Activated CD8-positive, alpha-beta T cell treated with anti-CD3 and anti-CD28 coated beads for 36 hours (primary cell): ENCODE measurements at regions of chr11 and their contacts with region 1.

Region 1: DNA sequence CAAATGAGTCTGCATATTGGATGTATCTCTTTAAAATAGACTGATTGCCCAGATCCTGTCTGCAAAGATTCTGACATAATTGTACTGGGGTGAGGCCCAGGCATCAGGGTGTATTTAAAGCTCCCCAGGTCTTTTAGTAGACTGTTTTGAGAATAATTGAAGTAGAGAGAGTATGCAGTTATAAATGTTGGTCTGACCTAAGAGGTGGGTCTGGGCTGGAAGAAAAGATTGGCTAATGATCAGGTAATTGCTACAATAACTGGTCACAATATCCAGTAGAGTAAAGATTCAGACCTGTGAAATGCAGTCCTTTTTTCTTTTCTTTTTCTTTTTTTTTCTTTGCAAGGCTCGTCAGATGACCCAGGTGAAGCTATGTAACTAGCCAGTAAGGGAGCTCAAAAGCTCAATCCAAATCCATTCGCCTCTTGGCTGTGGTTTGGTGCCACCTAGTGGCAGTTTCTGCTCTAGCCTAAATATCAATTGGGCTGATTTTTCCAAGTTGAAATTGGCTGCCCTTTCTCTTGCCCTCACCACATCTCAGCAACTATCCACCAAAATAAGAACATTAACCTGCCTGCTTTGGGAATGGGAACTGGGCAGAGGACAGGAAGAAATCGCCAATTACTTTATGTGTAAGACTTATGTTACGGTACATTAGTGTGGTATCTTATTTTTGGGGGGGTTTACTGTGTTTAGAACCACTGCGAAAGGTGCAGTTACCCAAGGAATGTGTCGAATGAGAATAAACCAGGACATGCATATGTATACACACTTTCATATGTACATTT is 45.9 kb downstream of the ZNF143 start:
- DNase-seq: peak; percentile 89
- ATAC-seq: peak; percentile 83
- H3K4me3 Mint-ChIP-seq: no peak overlapping the region
- H3K27ac Mint-ChIP-seq: no peak overlapping the region
- H3K4me1 Mint-ChIP-seq: peaks cover 8% of the 10 kb centered on the region
- H3K27me3 Mint-ChIP-seq: no peaks in the 10 kb centered on the region
- CTCF ChIP-seq: peak; percentile 82

Region 2: DNA sequence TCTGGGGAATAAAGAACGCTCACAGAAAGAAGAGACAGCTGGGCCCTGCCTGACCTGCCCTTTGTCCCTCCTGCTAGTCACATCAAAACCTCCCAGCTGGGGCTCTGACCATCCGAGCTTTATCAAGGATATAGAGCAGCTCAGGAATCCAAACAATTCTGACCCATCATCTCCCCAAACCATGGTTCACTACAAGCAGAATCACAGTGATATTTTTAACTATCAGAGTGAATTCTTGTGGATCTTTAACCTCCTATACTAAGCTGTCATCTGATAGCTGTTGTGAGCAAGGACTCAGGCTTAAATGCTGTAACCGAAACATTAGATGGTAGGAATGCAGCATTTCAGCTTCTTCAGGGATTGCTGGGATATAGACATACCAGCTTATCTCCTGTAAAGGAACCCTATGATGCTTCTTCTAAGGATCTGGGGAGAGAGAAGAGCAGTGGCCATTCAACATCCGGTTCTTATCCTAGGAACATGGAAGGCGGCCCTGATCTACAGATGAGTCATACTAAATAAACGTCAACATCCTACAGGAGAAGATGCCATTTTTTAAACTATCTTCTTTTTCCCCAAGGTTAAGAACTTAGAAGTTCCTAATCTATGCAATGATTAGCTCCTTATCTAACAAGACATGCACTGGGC is 680.4 kb before region 1 on chr11:
- CTCF ChIA-PET with region 1: no interaction called
- POLR2A ChIA-PET with region 1: no interaction called
- intact Hi-C with region 1: no loop called
- DNase-seq: no peak
- ATAC-seq: no peak
- H3K4me3 Mint-ChIP-seq: no peak overlapping the region
- H3K27ac Mint-ChIP-seq: no peak overlapping the region
- H3K4me1 Mint-ChIP-seq: no peaks in the 10 kb centered on the region
- H3K27me3 Mint-ChIP-seq: peaks cover 3% of the 10 kb centered on the region
- CTCF ChIP-seq: no peak

Region 3: DNA sequence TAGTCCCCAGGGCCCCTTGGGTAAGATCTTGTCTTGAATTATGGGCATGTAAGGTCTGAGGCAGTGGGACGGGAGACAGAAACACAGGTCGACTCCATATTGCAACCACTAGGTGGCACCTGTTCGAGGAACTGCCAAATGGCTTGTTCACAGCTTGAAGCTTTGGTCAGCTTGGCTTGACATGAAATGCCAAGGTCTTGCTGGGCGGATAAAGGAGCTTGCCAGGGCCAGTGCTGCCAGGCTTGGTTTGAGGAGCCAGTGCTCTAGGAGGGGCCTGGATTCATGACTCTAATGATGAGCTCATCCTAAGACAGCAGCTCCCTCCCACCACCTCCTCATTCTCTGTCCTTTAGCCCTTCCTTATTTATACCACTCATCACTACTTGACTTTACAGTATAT is 491.0 kb before region 1 on chr11:
- CTCF ChIA-PET with region 1: interaction called, 36 read pairs
- POLR2A ChIA-PET with region 1: no interaction called
- intact Hi-C with region 1: loop called (anchors 10 kb)
- DNase-seq: peak; percentile 72
- ATAC-seq: peak; percentile 97
- H3K4me3 Mint-ChIP-seq: no peak overlapping the region
- H3K27ac Mint-ChIP-seq: no peak overlapping the region
- H3K4me1 Mint-ChIP-seq: peaks cover 11% of the 10 kb centered on the region
- H3K27me3 Mint-ChIP-seq: no peaks in the 10 kb centered on the region
- CTCF ChIP-seq: peak; percentile 67

Region 4: GRCh38 chr11:9158898-9159391 is 347.7 kb before region 1 on chr11:
- CTCF ChIA-PET with region 1: interaction called, 5 read pairs
- POLR2A ChIA-PET with region 1: no interaction called
- intact Hi-C with region 1: loop called (anchors 10 kb)
- DNase-seq: no peak
- ATAC-seq: peak; percentile 54
- H3K4me3 Mint-ChIP-seq: no peak overlapping the region
- H3K27ac Mint-ChIP-seq: peak overlapping the region; percentile 83
- H3K4me1 Mint-ChIP-seq: peaks cover 25% of the 10 kb centered on the region
- H3K27me3 Mint-ChIP-seq: no peaks in the 10 kb centered on the region
- CTCF ChIP-seq: no peak

Region 5: DNA sequence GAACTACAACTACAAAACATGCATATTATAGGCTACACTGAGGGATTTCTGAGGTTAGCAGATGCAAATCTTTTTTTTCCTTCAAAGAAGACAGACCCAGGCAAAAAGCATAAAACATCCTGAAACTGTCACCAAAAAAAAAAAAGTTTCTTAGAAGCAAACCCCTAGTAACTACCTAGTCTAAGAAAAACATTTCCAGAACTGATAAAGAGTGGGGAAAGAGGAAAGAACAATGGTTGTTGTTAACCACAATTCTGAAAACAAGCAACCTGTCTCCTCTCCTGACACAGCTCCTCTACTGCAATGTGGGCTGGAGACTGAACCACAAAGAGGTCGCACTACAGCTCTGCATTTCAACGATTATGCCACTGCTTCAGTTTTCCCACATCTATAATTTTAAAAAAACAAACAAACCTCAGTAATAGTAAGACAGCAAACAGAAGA is 256.5 kb before region 1 on chr11:
- CTCF ChIA-PET with region 1: interaction called, 3 read pairs
- POLR2A ChIA-PET with region 1: no interaction called
- intact Hi-C with region 1: loop called (anchors 10 kb)
- DNase-seq: peak; percentile 64
- ATAC-seq: peak; percentile 83
- H3K4me3 Mint-ChIP-seq: peak overlapping the region; percentile 29
- H3K27ac Mint-ChIP-seq: peak overlapping the region; percentile 28
- H3K4me1 Mint-ChIP-seq: peaks cover 59% of the 10 kb centered on the region
- H3K27me3 Mint-ChIP-seq: no peaks in the 10 kb centered on the region
- CTCF ChIP-seq: no peak

Region 6: GRCh38 chr11:9320047-9320446 is 186.6 kb before region 1 on chr11:
- CTCF ChIA-PET with region 1: no interaction called
- POLR2A ChIA-PET with region 1: no interaction called
- intact Hi-C with region 1: no loop called
- DNase-seq: no peak
- ATAC-seq: no peak
- H3K4me3 Mint-ChIP-seq: no peak overlapping the region
- H3K27ac Mint-ChIP-seq: no peak overlapping the region
- H3K4me1 Mint-ChIP-seq: peaks cover under 1% of the 10 kb centered on the region
- H3K27me3 Mint-ChIP-seq: peaks cover 11% of the 10 kb centered on the region
- CTCF ChIP-seq: no peak

Region 7: GRCh38 chr11:9489080-9489765 is 17.5 kb before region 1 on chr11:
- CTCF ChIA-PET with region 1: interaction called, 41 read pairs
- POLR2A ChIA-PET with region 1: interaction called, 3 read pairs
- intact Hi-C with region 1: no loop called
- DNase-seq: no peak
- ATAC-seq: no peak
- H3K4me3 Mint-ChIP-seq: no peak overlapping the region
- H3K27ac Mint-ChIP-seq: no peak overlapping the region
- H3K4me1 Mint-ChIP-seq: no peaks in the 10 kb centered on the region
- H3K27me3 Mint-ChIP-seq: no peaks in the 10 kb centered on the region
- CTCF ChIP-seq: no peak

Region 8: DNA sequence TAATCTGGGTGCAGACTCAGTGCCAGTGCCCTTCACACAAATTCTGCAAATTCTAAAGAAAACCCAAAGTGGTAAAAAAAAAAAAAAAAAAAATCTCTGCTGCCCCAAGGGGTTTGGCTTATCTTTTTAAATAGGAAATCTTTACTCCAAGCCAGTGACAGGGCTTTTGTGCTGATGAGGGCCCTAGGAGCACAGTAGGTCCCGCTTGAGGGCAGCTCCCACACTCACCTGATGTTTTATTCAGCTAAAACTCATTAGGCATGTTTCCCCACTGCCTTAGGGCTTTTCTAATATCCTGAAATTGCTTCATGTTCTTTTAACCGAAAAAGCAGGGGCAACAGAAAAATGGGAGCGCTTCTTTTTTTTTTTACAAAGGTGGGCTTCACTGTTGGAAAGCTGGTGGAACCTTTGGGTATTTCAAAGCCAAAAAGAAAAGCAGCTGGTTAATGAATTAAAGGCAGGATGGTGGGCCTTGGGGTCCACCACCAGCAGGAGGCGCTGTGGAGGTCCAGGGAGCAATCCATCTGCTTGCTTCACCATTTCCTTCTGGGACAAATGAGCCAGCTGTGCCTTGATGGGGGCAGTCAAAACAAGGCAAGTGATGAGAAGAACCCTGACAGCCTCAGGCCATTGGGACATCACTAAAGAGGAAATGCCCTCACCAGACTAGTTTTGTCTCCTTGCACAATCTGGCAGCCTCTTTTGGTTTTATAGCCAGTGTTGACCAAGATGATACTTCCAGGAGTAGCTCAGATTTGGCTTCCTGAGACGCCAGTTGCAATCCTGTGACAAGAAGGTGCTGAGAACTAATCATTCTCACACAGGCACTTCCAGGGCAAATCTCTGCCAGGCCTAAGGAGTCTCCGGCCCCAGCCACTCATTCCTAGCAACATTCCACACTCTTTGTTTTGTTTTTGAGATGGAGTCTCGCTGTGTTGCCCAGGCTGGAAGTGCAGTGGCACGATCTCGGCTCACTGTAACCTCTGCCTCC is 28.4 kb after region 1 on chr11:
- CTCF ChIA-PET with region 1: interaction called, 25 read pairs
- POLR2A ChIA-PET with region 1: no interaction called
- intact Hi-C with region 1: no loop called
- DNase-seq: peak; percentile 89
- ATAC-seq: peak; percentile 75
- H3K4me3 Mint-ChIP-seq: no peak overlapping the region
- H3K27ac Mint-ChIP-seq: no peak overlapping the region
- H3K4me1 Mint-ChIP-seq: no peaks in the 10 kb centered on the region
- H3K27me3 Mint-ChIP-seq: no peaks in the 10 kb centered on the region
- CTCF ChIP-seq: peak; percentile 83